ENCODE measurements at regions of chr6 and their contacts with region 1.

Region 1: GRCh38 chr6:10901770-10902169 is 14.9 kb downstream of the SYCP2L start:
- DNase-seq: no peak
- ATAC-seq: no peak; the same call in 1 of the 2 replicates
- H3K4me3 Mint-ChIP-seq: no peak overlapping the region
- H3K27ac Mint-ChIP-seq: no peak overlapping the region
- H3K4me1 Mint-ChIP-seq: peaks cover 6% of the 10 kb centered on the region
- H3K27me3 Mint-ChIP-seq: no peaks in the 10 kb centered on the region
- CTCF ChIP-seq: no peak

Region 2: DNA sequence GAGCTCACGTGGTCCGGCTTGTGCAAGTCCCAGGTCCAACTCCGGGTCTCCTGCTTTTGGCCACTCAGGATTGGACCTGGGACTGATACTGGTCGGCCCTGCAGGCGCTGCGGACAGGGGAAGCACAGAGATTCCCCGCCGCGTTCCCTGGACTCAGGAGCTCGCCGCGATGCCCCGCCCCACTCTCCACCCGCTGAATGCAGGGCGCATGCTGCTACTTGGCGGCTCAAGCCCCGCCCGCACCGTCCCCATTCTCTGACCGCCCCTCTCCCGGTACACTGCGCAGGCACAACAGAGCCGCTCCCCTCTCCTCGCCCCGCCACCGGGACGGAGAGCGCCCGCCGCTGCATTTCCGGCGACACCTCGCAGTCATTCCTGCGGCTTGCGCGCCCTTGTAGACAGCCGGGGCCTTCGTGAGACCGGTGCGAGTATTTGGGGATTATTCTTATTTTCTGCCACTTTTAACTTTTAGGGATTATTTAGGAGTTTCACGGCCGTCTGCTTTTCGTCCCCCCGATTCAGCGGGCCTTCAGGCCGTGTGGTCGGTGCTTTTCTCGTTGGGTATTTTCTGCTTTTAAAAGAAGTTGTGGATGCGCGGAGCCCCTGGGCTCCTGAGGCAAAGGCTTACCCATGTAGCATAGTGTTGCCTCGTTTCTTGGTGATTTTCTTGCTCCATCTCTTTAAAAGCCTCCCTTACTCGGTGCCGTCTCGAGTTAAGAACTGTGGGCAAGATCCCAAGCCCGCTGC is 178.8 kb before region 1 on chr6 and contains the start of gene TMEM14C:
- CTCF ChIA-PET with region 1: no interaction called
- POLR2A ChIA-PET with region 1: no interaction called
- DNase-seq: peak; percentile 100
- ATAC-seq: peak; percentile 97
- H3K4me3 Mint-ChIP-seq: peak within 1 kb of the TSS; percentile 97
- H3K27ac Mint-ChIP-seq: peak within 1 kb of the TSS; percentile 99
- H3K4me1 Mint-ChIP-seq: peaks cover 28% of the 10 kb centered on the region
- H3K27me3 Mint-ChIP-seq: no peaks in the 10 kb centered on the region
- CTCF ChIP-seq: no peak
- total RNA-seq, gene TMEM14C: 103 to 122 TPM (median 119 TPM) in 3 replicates

Region 3: DNA sequence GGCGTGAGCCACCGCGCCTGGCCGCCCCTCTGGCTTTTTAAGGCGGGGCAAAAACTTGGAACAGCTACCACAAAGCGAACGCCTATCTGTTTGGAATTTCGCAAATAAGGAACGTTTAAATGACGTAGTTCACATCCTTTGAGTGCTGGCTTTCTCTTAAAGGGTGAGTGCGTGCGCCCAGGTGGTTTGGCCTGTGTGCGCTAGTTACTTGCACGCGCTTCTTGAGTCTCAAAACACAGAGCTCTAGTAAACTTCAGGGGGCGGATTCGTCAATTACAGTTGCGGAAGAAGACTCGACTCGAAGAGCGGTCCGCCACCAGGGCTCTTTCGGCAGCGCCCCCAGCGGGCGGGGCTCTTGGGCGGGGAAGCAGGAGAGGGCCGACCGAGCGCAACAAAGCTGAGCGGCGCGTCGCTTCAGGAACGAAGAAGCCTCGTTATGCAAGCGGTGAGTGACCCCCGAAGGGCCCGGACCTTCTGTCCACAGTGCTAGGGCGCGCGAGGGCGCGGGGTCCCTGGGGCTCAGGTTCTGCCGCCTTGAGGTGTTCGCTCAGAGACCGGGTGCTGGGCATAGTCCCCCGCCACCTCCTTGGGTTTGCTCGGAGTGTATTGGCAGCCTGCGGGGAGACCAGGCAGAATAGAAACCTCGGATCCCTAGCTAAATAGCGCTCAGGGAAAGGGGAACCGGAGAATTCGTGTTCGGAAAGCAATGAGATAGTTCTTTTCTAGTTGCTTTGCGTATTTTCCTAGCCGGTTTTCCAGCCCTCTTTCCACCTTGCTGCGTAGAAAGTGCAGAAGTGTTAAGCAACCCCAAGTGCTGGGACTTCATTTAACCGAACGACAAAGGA is 14.9 kb before region 1 on chr6 and contains the start of gene SYCP2L:
- CTCF ChIA-PET with region 1: interaction called, 20 read pairs
- POLR2A ChIA-PET with region 1: no interaction called
- DNase-seq: peak; percentile 61
- ATAC-seq: peak; percentile 73
- H3K4me3 Mint-ChIP-seq: peak within 1 kb of the TSS; percentile 91
- H3K27ac Mint-ChIP-seq: peak within 1 kb of the TSS; percentile 97
- H3K4me1 Mint-ChIP-seq: peaks cover 24% of the 10 kb centered on the region
- H3K27me3 Mint-ChIP-seq: peaks cover 61% of the 10 kb centered on the region
- CTCF ChIP-seq: no peak
- total RNA-seq, gene SYCP2L: 5.4 to 6.7 TPM (median 6.3 TPM) in 3 replicates

Region 4: GRCh38 chr6:10976571-10976970 is 74.8 kb after region 1 on chr6:
- CTCF ChIA-PET with region 1: no interaction called
- POLR2A ChIA-PET with region 1: no interaction called
- DNase-seq: no peak
- ATAC-seq: no peak
- H3K4me3 Mint-ChIP-seq: no peak overlapping the region
- H3K27ac Mint-ChIP-seq: no peak overlapping the region
- H3K4me1 Mint-ChIP-seq: peaks cover 11% of the 10 kb centered on the region
- H3K27me3 Mint-ChIP-seq: no peaks in the 10 kb centered on the region
- CTCF ChIP-seq: no peak

Measured in WTC11 (cell line).